ENCODE measurements at regions of chr14 and their contacts with region 1.

Region 1: GRCh38 chr14:35416108-35416750 is 11.7 kb upstream of the NFKBIA start:
- DNase-seq: no peak
- H3K4me3 ChIP-seq: no peak overlapping the region
- H3K27ac ChIP-seq: no peak overlapping the region
- H3K4me1 ChIP-seq: no peaks in the 10 kb centered on the region
- H3K27me3 ChIP-seq: no peaks in the 10 kb centered on the region
- CTCF ChIP-seq: no peak
- EP300 ChIP-seq: no peak
- POLR2A ChIP-seq: no peak

Region 2: GRCh38 chr14:34539407-34540180 is 876.6 kb before region 1 on chr14 and contains the start of gene EAPP:
- intact Hi-C with region 1: loop called in 1 of 4 experiments (anchors 5 kb)
- DNase-seq: peak; percentile 96 to 98 (median 98)
- H3K4me3 ChIP-seq: peak within 1 kb of the TSS; percentile 74
- H3K27ac ChIP-seq: peak within 1 kb of the TSS; percentile 84 to 93
- H3K4me1 ChIP-seq: peaks cover 6% of the 10 kb centered on the region
- H3K27me3 ChIP-seq: no peaks in the 10 kb centered on the region
- CTCF ChIP-seq: no peak
- EP300 ChIP-seq: peak; percentile 8
- POLR2A ChIP-seq: peak; percentile 93
- total RNA-seq, gene EAPP: 41.1 to 53.8 (median 47.0) TPM

Region 3: DNA sequence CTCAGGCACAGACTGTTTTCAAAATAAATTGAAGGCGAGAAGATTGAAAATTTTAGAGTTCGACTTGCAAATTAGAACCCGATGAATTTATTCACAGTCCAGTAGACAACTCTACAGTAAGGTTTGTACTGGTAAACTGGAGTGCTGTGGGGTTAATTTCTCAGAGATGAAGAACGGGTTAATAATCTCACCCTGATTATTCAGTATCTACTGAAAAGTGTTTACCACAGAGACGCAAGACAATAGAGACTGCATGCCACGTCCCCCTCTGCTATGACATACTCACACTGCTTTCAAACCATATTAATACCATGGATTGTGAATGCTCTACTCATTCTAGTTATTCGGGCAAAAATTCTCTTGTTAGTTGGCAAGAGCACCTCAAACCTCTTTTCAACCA is 737.9 kb before region 1 on chr14:
- intact Hi-C with region 1: loop called in 1 of 4 experiments (anchors 10 kb)
- DNase-seq: no peak
- H3K4me3 ChIP-seq: no peak overlapping the region
- H3K27ac ChIP-seq: no peak overlapping the region
- H3K4me1 ChIP-seq: no peaks in the 10 kb centered on the region
- H3K27me3 ChIP-seq: no peaks in the 10 kb centered on the region
- CTCF ChIP-seq: no peak
- EP300 ChIP-seq: no peak
- POLR2A ChIP-seq: no peak

Region 4: DNA sequence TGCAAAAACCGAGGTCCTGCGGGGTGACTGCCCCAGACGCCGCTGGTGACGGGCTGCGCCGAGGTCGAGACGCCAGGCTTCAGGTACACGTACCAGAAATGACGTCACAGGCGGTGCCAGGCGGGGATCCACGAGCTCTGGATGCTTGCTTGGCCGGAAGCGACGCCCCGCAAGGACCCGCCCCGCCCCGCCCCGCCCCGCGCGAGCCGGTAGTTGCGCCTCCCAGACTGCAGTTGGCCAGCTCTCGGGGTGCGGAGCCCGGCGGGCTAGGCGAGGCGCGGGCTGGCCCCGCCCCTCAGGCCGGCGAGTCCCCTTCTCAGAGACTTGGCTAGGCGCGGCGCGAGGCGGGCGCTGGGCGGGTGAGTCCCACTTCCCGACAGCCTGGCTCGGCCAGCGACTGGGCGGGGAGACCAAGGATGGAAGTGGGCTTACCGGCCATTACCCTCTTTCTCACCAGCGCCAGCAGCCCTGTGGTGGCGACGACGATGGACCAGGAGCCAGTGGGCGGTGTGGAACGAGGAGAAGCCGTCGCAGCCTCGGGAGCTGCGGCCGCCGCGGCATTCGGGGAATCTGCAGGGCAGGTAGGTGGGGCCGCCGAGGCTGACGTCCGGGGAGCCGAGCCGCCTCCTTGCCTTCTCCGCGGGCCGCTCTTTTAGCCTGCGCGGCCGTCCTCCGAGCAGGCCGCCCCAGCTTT is 370.0 kb before region 1 on chr14 and contains the start of gene FAM177A1:
- intact Hi-C with region 1: loop called in 1 of 4 experiments (anchors 10 kb)
- DNase-seq: peak; percentile 97 to 98 (median 97)
- H3K4me3 ChIP-seq: peak within 1 kb of the TSS; percentile 77
- H3K27ac ChIP-seq: peak within 1 kb of the TSS; percentile 48 to 92
- H3K4me1 ChIP-seq: no peaks in the 10 kb centered on the region
- H3K27me3 ChIP-seq: no peaks in the 10 kb centered on the region
- CTCF ChIP-seq: no peak
- EP300 ChIP-seq: peak; percentile 68
- POLR2A ChIP-seq: peak; percentile 82
- total RNA-seq, gene FAM177A1: 15.7 to 45.9 (median 35.5) TPM

Region 5: GRCh38 chr14:35134328-35135123 is 281.7 kb before region 1 on chr14:
- intact Hi-C with region 1: loop called in 2 of 4 experiments (anchors 5 kb)
- DNase-seq: no peak
- H3K4me3 ChIP-seq: no peak overlapping the region
- H3K27ac ChIP-seq: no peak overlapping the region
- H3K4me1 ChIP-seq: no peaks in the 10 kb centered on the region
- H3K27me3 ChIP-seq: no peaks in the 10 kb centered on the region
- CTCF ChIP-seq: no peak
- EP300 ChIP-seq: no peak
- POLR2A ChIP-seq: no peak

Region 6: GRCh38 chr14:35140718-35141581 is 275.3 kb before region 1 on chr14:
- intact Hi-C with region 1: loop called (anchors 5 kb)
- DNase-seq: no peak
- H3K4me3 ChIP-seq: no peak overlapping the region
- H3K27ac ChIP-seq: no peak overlapping the region
- H3K4me1 ChIP-seq: no peaks in the 10 kb centered on the region
- H3K27me3 ChIP-seq: no peaks in the 10 kb centered on the region
- CTCF ChIP-seq: peak in 2 of 3 donors; percentile 37 to 60
- EP300 ChIP-seq: no peak
- POLR2A ChIP-seq: no peak

Region 7: DNA sequence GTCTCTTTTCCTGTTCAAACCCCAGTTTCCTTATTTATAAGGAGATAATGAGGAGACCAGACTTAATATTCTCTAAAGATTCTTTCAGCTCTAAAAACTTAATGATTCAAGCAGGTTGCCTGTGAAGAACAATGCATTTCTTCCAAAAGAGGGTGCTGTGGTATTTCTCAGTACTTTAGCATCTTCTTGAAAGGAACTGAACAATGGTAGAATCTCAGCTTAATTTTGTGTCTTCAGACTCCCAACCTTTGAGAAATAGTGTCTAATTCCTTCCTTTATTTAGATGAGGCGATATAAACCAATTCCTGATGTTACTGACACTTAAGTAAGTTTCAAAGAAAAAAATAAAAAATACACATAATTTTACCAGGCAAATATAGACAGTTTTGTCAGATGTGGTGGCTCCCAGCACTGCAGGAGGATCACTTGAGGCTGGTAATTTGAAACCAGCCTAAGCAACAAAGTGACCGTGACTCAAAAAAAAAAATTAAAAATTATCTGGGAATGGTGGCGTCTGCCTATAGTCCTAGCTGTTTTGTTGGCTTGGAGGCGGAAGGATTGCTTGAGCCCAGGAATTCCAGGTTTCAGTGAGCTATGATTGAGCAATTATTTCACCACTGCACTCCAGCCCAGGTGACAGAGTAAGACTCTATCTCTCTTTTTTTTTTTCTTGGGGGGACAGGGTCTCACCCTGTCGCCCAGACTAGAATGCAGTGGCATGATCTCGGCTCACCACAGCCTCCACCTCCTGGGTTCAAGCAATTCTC is 200.9 kb before region 1 on chr14:
- intact Hi-C with region 1: loop called in 1 of 4 experiments (anchors 2 kb)
- DNase-seq: no peak
- H3K4me3 ChIP-seq: no peak overlapping the region
- H3K27ac ChIP-seq: peak overlapping the region in 1 of 2 donors; percentile 79
- H3K4me1 ChIP-seq: peaks cover 1% of the 10 kb centered on the region
- H3K27me3 ChIP-seq: no peaks in the 10 kb centered on the region
- CTCF ChIP-seq: peak in 2 of 3 donors; percentile 25 to 53
- EP300 ChIP-seq: no peak
- POLR2A ChIP-seq: no peak

Region 8: GRCh38 chr14:35458442-35458841 is 42.2 kb after region 1 on chr14:
- intact Hi-C with region 1: no loop called
- DNase-seq: no peak
- H3K4me3 ChIP-seq: no peak overlapping the region
- H3K27ac ChIP-seq: no peak overlapping the region
- H3K4me1 ChIP-seq: no peaks in the 10 kb centered on the region
- H3K27me3 ChIP-seq: no peaks in the 10 kb centered on the region
- CTCF ChIP-seq: no peak
- EP300 ChIP-seq: no peak
- POLR2A ChIP-seq: no peak

Region 9: GRCh38 chr14:35553808-35554207 is 137.6 kb after region 1 on chr14:
- intact Hi-C with region 1: no loop called
- DNase-seq: no peak
- H3K4me3 ChIP-seq: no peak overlapping the region
- H3K27ac ChIP-seq: no peak overlapping the region
- H3K4me1 ChIP-seq: no peaks in the 10 kb centered on the region
- H3K27me3 ChIP-seq: no peaks in the 10 kb centered on the region
- CTCF ChIP-seq: no peak
- EP300 ChIP-seq: no peak
- POLR2A ChIP-seq: no peak